ENCODE measurements at regions of chr2 and their contacts with region 1.

Region 1: GRCh38 chr2:44479122-44479887 is 117.6 kb downstream of the CAMKMT start:
- DNase-seq: no peak
- ATAC-seq: peak; percentile 95
- H3K4me3 Mint-ChIP-seq: no peak overlapping the region
- H3K27ac Mint-ChIP-seq: peak overlapping the region; percentile 38; the same call in 1 of the 2 replicates
- H3K4me1 Mint-ChIP-seq: peaks cover 35% of the 10 kb centered on the region
- H3K27me3 Mint-ChIP-seq: no peaks in the 10 kb centered on the region
- CTCF ChIP-seq: peak; percentile 81

Region 2: DNA sequence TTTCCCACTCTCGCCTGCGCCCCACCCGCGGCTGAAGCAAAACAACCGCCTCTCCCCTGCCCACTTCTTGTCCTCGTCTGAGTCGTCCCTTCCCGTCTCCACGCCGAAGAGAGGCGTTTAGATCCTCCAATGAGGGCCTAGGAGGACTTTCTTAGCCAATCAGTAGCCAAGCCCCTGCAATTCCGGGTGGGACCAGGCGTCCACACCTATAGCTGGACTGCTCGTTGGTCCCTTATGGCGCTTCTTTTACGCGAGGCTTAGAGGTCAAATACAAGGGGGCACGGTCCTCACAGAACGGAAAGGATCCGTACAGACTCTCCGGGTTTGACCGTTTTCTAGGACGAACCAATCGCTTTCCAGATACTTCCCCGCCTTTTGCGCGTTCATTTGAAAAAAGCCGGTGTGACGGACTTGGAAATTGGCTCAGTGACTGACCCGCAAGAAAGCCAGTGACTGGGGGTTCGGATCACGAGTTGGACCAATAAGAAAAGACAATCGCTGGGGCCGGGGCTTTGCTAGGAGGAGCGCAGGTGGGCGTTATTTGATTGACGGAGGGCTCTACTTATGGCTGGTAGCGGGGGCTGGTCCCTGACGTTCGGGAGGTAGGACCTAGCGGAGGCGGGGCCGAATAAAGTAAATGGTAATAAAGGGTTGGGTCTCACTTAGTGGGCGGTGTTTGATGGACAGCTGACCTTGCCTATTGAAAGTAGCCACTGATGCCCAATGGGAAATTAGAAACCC is 311.2 kb before region 1 on chr2:
- CTCF ChIA-PET with region 1: no interaction called
- POLR2A ChIA-PET with region 1: no interaction called
- DNase-seq: peak; percentile 98
- ATAC-seq: peak; percentile 88
- H3K4me3 Mint-ChIP-seq: peak overlapping the region; percentile 77
- H3K27ac Mint-ChIP-seq: peak overlapping the region; percentile 99
- H3K4me1 Mint-ChIP-seq: peaks cover 27% of the 10 kb centered on the region
- H3K27me3 Mint-ChIP-seq: no peaks in the 10 kb centered on the region; the same call in none of the 2 replicates
- CTCF ChIP-seq: no peak

Region 3: DNA sequence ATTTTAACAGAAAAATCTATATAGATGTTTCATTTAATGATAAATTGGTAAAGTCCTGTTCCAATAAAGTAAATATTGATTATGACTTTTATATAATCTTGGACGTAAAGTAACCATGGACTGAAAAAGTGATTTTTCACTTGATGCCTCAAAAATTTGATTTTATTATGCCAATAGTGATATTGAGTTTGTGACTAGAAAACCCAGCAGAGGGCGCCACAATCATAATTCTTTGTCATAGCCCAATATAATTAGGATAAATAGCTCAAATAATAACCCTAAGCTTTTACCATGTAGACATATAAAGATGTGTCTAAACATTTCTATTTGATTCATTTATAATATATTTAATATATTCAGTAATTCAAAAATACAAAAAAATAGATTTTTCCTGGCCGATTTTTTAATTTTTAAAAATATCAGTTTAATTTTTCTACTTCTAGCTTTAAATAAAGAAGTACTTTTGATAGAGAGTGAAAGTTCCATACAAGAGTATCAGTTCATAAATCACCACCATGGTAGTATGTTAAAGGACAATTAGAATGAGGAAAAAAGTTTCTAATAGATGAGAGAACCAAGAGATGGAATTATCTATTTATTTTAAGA is 86.9 kb before region 1 on chr2:
- CTCF ChIA-PET with region 1: interaction called, 27 read pairs
- POLR2A ChIA-PET with region 1: no interaction called
- DNase-seq: peak; percentile 41
- ATAC-seq: no peak
- H3K4me3 Mint-ChIP-seq: no peak overlapping the region
- H3K27ac Mint-ChIP-seq: no peak overlapping the region
- H3K4me1 Mint-ChIP-seq: peaks cover 29% of the 10 kb centered on the region
- H3K27me3 Mint-ChIP-seq: no peaks in the 10 kb centered on the region
- CTCF ChIP-seq: 0 out of 2 replicates have a peak, but pooled peaks have one; percentile 35

Region 4: DNA sequence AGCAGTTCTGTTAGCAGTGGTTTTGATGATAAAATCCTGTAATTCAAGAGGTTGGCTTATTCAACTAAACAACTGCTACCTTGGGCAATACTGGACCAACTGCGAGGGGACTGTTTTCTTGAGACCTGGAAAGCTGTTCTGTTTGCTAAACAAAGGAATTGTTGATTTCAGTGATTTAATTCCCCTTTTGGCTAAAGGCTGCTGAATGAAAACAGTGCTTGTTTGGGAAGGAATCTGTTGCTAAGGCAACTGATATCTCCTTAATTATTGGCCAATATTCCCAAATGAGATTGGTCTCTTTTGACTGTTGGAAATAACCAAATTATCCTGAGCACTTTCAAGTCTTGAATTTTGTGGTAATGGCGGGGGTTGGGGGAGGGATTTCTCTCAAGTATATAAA is 19.2 kb after region 1 on chr2:
- CTCF ChIA-PET with region 1: interaction called, 22 read pairs
- POLR2A ChIA-PET with region 1: interaction called, 5 read pairs
- DNase-seq: no peak
- ATAC-seq: no peak
- H3K4me3 Mint-ChIP-seq: no peak overlapping the region
- H3K27ac Mint-ChIP-seq: 0 out of 2 replicates have a peak overlapping the region, but pooled peaks have one; percentile 3
- H3K4me1 Mint-ChIP-seq: peaks cover 33% of the 10 kb centered on the region
- H3K27me3 Mint-ChIP-seq: no peaks in the 10 kb centered on the region
- CTCF ChIP-seq: no peak

Region 5: GRCh38 chr2:44560961-44561360 is 81.7 kb after region 1 on chr2:
- CTCF ChIA-PET with region 1: interaction called, 10 read pairs
- POLR2A ChIA-PET with region 1: no interaction called
- DNase-seq: no peak
- ATAC-seq: no peak
- H3K4me3 Mint-ChIP-seq: no peak overlapping the region
- H3K27ac Mint-ChIP-seq: no peak overlapping the region
- H3K4me1 Mint-ChIP-seq: no peaks in the 10 kb centered on the region
- H3K27me3 Mint-ChIP-seq: no peaks in the 10 kb centered on the region
- CTCF ChIP-seq: no peak

Region 6: DNA sequence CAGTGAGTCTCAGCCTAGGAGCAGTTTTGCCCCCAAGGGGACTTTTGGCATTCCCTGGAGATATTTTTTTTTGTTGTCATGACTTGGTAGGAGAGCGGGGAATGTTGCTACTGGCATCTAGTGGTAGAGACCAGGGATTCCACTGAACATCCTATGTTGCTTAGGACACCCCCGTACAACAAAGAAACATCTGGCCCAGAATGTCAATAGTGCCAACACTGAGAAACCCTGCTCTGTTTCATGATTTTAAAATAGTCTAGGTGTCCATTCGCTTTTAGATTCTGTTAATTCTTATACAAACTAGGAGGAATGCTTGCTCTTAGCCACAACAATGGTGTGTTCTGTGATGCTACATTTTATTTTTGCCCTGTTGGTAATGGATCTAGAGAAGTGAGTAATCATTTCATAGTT is 236.4 kb after region 1 on chr2:
- CTCF ChIA-PET with region 1: interaction called, 22 read pairs
- POLR2A ChIA-PET with region 1: no interaction called
- DNase-seq: peak; percentile 26
- ATAC-seq: peak; percentile 97
- H3K4me3 Mint-ChIP-seq: no peak overlapping the region
- H3K27ac Mint-ChIP-seq: no peak overlapping the region
- H3K4me1 Mint-ChIP-seq: peaks cover 14% of the 10 kb centered on the region
- H3K27me3 Mint-ChIP-seq: no peaks in the 10 kb centered on the region
- CTCF ChIP-seq: no peak

Measured in WTC11 (cell line).